H1 (cell line): ENCODE measurements at regions of chr20 and their contacts with region 1.

Region 1: DNA sequence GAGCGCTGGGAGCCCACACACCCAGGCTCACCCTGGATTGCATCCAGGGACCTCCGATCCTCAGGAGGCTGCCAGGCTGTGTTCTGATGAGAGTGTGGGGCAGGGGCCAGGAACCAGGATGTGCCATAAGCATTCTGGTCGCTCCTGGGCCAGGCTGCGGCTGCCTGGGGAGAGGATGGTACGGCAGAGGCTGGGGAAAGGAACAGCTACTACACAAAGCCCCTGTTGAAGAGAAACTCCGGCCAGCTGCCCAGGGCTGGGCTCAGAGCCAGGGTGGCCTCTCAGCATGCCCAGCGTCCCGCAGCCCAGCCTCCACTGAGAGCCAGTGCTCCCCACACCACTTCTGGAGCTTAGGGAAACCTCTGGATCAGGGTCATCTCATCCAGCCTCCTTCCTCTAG is 21.7 kb upstream of the OCSTAMP start:
- DNase-seq: no peak
- H3K4me3 ChIP-seq: no peak overlapping the region
- H3K27ac ChIP-seq: no peak overlapping the region
- H3K4me1 ChIP-seq: no peaks in the 10 kb centered on the region; a peak in 3 of 7 replicates
- H3K27me3 ChIP-seq: no peaks in the 10 kb centered on the region
- CTCF ChIP-seq: no peak
- EP300 ChIP-seq: no peak
- POLR2A ChIP-seq: no peak
- RAD21 ChIP-seq: no peak

Region 2: GRCh38 chr20:46543959-46544358 is 28.2 kb before region 1 on chr20:
- CTCF ChIA-PET with region 1: no interaction called
- POLR2A ChIA-PET with region 1: no interaction called
- DNase-seq: no peak
- H3K4me3 ChIP-seq: no peak overlapping the region
- H3K27ac ChIP-seq: no peak overlapping the region
- H3K4me1 ChIP-seq: peaks cover 0 to 5% (median 2%) of the 10 kb centered on the region in 4 experiments; a peak in 2 of 7 replicates
- H3K27me3 ChIP-seq: no peaks in the 10 kb centered on the region; a peak in 1 of 7 replicates
- CTCF ChIP-seq: no peak
- EP300 ChIP-seq: no peak
- POLR2A ChIP-seq: no peak
- RAD21 ChIP-seq: no peak

Region 3: GRCh38 chr20:46583411-46584214 is 11.5 kb after region 1 on chr20:
- CTCF ChIA-PET with region 1: interaction called, 17 read pairs
- POLR2A ChIA-PET with region 1: interaction called, 5 read pairs
- DNase-seq: peak; percentile 69 to 80
- H3K4me3 ChIP-seq: peak overlapping the region in 2 of 4 experiments; percentile 11 to 35; a peak in 1 of 8 replicates
- H3K27ac ChIP-seq: peak overlapping the region; percentile 56; the same call in 1 of the 2 replicates
- H3K4me1 ChIP-seq: peaks cover 5 to 17% (median 9%) of the 10 kb centered on the region in 4 experiments; a peak in 6 of 7 replicates
- H3K27me3 ChIP-seq: no peaks in the 10 kb centered on the region
- CTCF ChIP-seq: no peak; a peak in 1 of 4 replicates
- EP300 ChIP-seq: 0 out of 3 replicates have a peak, but pooled peaks of 1 of the 2 experiments have one; percentile 75
- POLR2A ChIP-seq: no peak; a peak in 1 of 3 replicates
- RAD21 ChIP-seq: peak in 1 of 2 experiments; percentile 9; a peak in 1 of 4 replicates